Activated naive CD4-positive, alpha-beta T cell treated with anti-CD3 and anti-CD28 coated beads for 36 hours (primary cell): ENCODE measurements at regions of chr10 and their contacts with region 1.

Region 1: GRCh38 chr10:62554632-62555199 is 180.5 kb downstream of the ZNF365 start:
- DNase-seq: peak; percentile 23
- H3K4me3 Mint-ChIP-seq: no peak overlapping the region
- H3K27ac Mint-ChIP-seq: no peak overlapping the region
- H3K4me1 Mint-ChIP-seq: no peaks in the 10 kb centered on the region
- H3K27me3 Mint-ChIP-seq: no peaks in the 10 kb centered on the region

Region 2: DNA sequence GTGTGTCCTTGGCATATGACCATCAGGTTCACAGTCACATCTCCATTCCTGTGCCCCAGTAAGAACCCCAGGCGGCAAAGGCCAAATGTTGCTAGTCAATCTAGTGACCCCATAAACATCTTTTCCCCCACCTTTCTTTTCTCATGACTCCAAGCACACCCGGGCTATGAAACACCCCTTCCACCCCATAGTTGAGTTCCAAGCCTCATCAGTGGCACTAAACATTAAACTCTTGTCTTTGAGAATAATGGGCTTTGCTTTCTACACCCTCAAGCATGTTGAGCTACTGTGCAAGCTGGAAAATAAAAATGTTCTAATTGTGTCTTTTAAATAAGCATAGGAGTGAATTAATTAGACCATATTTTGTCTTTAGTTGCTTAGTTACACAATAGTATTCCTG is 643.8 kb before region 1 on chr10:
- CTCF ChIA-PET with region 1: no interaction called
- intact Hi-C with region 1: no loop called
- DNase-seq: no peak
- H3K4me3 Mint-ChIP-seq: no peak overlapping the region
- H3K27ac Mint-ChIP-seq: no peak overlapping the region
- H3K4me1 Mint-ChIP-seq: peaks cover 55% of the 10 kb centered on the region
- H3K27me3 Mint-ChIP-seq: no peaks in the 10 kb centered on the region

Region 3: DNA sequence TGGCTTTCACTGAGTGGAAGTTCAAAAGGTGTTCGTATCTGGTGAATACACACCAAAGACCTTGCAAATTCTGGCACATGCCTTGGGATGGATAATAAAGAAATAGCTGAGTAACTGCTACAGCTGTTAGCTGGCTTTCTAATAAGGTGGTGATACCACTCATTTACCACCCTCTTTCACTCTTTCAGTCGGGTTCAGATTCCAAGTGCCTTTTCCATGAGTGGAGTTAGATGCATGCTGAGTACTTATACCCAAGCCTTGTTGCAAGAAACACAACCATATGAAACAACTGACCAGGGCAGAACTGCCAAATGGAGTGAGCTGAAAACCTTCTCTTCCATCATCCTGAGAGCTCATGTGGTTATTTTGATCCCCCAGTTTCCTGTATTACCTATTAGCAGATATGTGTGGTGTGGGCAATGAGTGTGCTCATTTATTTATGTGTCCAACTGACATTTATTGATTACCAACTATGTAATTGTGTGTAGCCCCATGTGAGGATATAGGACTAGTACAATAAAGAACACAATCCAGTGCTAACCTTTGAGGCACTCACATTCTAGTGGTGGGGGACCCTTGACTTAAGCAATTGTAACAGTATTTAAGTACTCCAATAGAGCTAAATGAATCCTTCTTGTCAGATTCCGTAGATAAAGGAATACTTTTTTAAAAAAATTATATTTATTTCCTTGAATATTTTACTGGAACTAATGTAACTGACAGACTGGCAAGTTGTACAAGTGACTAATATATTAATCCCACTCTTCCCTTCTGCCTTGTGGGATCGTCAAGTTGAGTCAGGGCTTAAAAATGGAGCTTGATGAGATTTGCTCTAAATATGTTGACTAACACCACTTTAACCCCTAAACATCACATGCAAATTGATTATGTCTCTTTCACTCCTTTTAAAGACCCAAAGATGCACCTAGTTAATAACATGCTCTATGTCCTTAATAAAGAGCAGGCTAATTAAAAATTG is 528.5 kb before region 1 on chr10:
- CTCF ChIA-PET with region 1: no interaction called
- intact Hi-C with region 1: no loop called
- DNase-seq: no peak
- H3K4me3 Mint-ChIP-seq: no peak overlapping the region
- H3K27ac Mint-ChIP-seq: peak overlapping the region; percentile 68
- H3K4me1 Mint-ChIP-seq: peaks cover 91% of the 10 kb centered on the region
- H3K27me3 Mint-ChIP-seq: no peaks in the 10 kb centered on the region

Region 4: GRCh38 chr10:62492012-62492869 is 62.5 kb before region 1 on chr10:
- CTCF ChIA-PET with region 1: interaction called, 3 read pairs
- intact Hi-C with region 1: loop called (anchors 2 kb)
- DNase-seq: peak; percentile 8
- H3K4me3 Mint-ChIP-seq: no peak overlapping the region
- H3K27ac Mint-ChIP-seq: no peak overlapping the region
- H3K4me1 Mint-ChIP-seq: no peaks in the 10 kb centered on the region
- H3K27me3 Mint-ChIP-seq: no peaks in the 10 kb centered on the region

Region 5: DNA sequence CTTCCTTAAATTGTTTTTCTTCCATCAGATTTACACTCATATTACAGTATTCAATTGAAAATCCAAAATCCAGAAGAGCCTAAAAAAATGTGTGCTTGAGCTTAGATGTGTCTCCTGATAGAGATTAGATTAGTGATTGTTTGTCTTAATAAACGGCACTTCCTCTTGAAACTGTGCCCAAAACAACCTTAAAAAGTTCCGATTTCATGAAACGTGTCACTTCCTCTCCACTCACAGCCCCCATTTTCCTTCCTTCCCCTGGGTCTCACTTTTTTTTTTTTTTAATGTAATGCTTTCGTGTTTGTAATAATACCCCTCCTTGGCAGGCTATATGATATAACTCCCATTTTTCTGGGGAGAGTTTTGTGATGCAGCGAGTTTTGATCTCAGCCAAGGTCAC is 135.0 kb after region 1 on chr10:
- CTCF ChIA-PET with region 1: no interaction called
- intact Hi-C with region 1: no loop called
- DNase-seq: no peak
- H3K4me3 Mint-ChIP-seq: peak overlapping the region; percentile 6
- H3K27ac Mint-ChIP-seq: peak overlapping the region; percentile 23
- H3K4me1 Mint-ChIP-seq: peaks cover 38% of the 10 kb centered on the region
- H3K27me3 Mint-ChIP-seq: no peaks in the 10 kb centered on the region